Heart right ventricle (tissue), 16 donors: ENCODE measurements at regions of chr1 and their contacts with region 1.

Region 1: GRCh38 chr1:66446261-66447001 is 87.5 kb upstream of the SGIP1 start:
- DNase-seq: peak in 1 of 2 donors; percentile 54
- ATAC-seq: peak in 7 of 8 donors; percentile 51 to 88 (median 70)
- H3K4me3 ChIP-seq: no peak overlapping the region
- H3K27ac ChIP-seq: peak overlapping the region in 8 of 10 donors; percentile 45 to 86 (median 66)
- H3K4me1 ChIP-seq: peaks cover 3 to 42% (median 33%) of the 10 kb centered on the region in 9 donors
- H3K27me3 ChIP-seq: no peaks in the 10 kb centered on the region
- CTCF ChIP-seq: peak; percentile 83 to 94 (median 88)

Region 2: DNA sequence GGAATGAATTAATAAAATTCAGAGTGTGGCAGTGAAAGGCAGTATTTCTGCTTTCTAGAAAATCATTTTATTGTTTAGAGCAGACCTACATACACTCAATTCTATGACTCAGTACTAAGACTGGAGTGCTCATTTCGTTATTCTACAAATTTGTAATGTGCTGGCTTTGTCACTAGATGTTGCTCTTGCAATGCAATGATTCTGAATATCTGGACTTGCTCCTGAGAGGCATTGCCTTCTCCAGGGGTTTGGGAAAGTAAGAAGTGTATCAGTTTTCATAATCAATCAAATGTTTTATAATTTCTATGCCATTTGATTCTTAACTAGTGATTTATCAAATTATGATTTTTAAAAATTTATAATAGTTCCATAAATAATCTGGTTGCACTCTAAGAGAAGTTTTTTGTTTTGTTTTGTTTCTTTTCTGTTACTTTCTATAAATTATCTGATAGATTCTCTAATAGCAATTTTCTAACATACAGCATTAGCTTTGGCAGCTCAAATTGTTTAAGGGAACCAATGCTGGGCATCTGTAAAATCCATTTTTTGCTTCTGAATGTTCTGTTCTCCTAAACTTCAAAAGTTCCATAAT is 193.0 kb before region 1 on chr1:
- intact Hi-C with region 1: loop called (anchors 1 to 5 kb)
- DNase-seq: peak in 1 of 2 donors; percentile 45
- ATAC-seq: peak; percentile 67 to 96 (median 92)
- H3K4me3 ChIP-seq: no peak overlapping the region
- H3K27ac ChIP-seq: no peak overlapping the region
- H3K4me1 ChIP-seq: peaks cover 0 to 43% (median 6%) of the 10 kb centered on the region in 9 donors
- H3K27me3 ChIP-seq: no peaks in the 10 kb centered on the region
- CTCF ChIP-seq: peak; percentile 66 to 92 (median 85)

Region 3: GRCh38 chr1:66402194-66402593 is 44.2 kb before region 1 on chr1:
- intact Hi-C with region 1: loop called in 1 of 10 experiments (anchors 5 kb)
- DNase-seq: peak; percentile 68 to 88
- ATAC-seq: peak; percentile 85 to 97 (median 94)
- H3K4me3 ChIP-seq: no peak overlapping the region
- H3K27ac ChIP-seq: peak overlapping the region in 8 of 10 donors; percentile 13 to 76 (median 28)
- H3K4me1 ChIP-seq: peaks cover 9 to 34% (median 20%) of the 10 kb centered on the region in 9 donors
- H3K27me3 ChIP-seq: no peaks in the 10 kb centered on the region
- CTCF ChIP-seq: no peak

Region 4: GRCh38 chr1:66503841-66504470 is 57.5 kb after region 1 on chr1:
- intact Hi-C with region 1: loop called in 5 of 10 experiments (anchors 2 to 5 kb)
- DNase-seq: peak in 1 of 2 donors; percentile 64
- ATAC-seq: peak; percentile 64 to 93 (median 78)
- H3K4me3 ChIP-seq: no peak overlapping the region
- H3K27ac ChIP-seq: peak overlapping the region in 1 of 10 donors; percentile 8
- H3K4me1 ChIP-seq: peaks cover 0 to 10% (median 0%) of the 10 kb centered on the region in 9 donors
- H3K27me3 ChIP-seq: no peaks in the 10 kb centered on the region
- CTCF ChIP-seq: peak; percentile 25 to 80 (median 71)